K562 (cell line): ENCODE measurements at regions of chr14 and their contacts with region 1.

Region 1: DNA sequence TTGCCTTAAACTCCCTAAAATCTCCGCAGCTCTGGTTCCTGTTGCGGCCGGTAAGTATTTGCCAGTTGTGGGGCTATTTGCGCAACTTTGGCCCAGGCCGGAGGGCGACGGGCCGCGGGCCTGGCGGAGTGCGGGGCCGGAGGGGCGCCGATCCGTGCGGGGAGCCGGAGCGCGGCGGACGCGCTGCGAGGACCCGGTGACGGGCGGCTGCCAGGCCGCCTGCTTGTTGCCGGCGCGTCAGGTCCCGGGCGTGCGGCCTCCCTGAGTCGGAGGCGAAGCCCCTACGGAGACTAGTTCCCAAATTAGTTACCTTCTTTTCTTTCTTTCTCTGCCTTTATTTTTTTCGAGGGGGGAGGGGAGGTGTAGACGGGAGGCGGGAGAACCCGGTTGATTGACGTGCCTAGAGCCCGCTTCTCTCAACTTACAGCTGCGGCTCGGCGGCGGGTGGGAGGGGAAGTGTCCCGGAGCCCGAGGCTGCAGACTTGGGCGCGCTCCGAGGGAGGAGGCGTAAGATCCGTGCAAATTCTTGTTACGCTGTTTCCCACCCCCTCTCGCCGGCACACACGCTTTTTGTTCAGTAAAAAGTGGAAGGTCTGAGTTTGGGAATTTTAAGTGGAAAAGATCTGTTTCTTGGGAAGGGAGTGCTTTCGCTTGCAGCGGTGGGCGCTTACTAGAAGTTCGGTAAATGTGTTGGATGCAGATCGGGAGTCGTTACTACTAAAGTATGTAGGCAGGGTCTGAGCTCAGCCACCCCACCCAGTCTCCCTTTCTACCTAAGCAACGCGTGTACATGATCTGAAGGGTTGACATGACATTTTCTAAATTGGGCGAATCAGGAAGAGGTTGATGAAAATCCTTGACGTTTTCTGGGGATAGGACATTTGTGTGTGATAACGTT is 576 bp downstream of the ZBTB1 start:
- DNase-seq: peak; percentile 56 to 90 (median 70)
- ATAC-seq: peak; percentile 68
- H3K4me3 ChIP-seq: peak overlapping the region; percentile 64
- H3K27ac ChIP-seq: peak overlapping the region; percentile 91
- H3K4me1 ChIP-seq: peaks cover 25 to 44% of the 10 kb centered on the region in 2 experiments
- H3K27me3 ChIP-seq: no peaks in the 10 kb centered on the region
- CTCF ChIP-seq: no peak
- EP300 ChIP-seq: no peak
- POLR2A ChIP-seq: 0 out of 2 replicates have a peak, but pooled peaks have one; percentile 45
- RAD21 ChIP-seq: no peak

Region 2: GRCh38 chr14:64465191-64465822 is 39.8 kb before region 1 on chr14 and contains the start of gene AKAP5:
- CTCF ChIA-PET with region 1: no interaction called
- POLR2A ChIA-PET with region 1: no interaction called
- in situ Hi-C with region 1: no loop called
- intact Hi-C with region 1: loop called (anchors 5 kb)
- DNase-seq: peak; percentile 60 to 88 (median 82)
- ATAC-seq: peak; percentile 94
- H3K4me3 ChIP-seq: peak within 1 kb of the TSS; percentile 57
- H3K27ac ChIP-seq: no peak within 1 kb of the TSS
- H3K4me1 ChIP-seq: peaks cover 8 to 9% of the 10 kb centered on the region in 2 experiments; a peak in 4 of 5 replicates
- H3K27me3 ChIP-seq: no peaks in the 10 kb centered on the region
- CTCF ChIP-seq: no peak
- EP300 ChIP-seq: no peak
- POLR2A ChIP-seq: no peak
- RAD21 ChIP-seq: no peak
- polyA plus RNA-seq, gene AKAP5: 0.06 to 0.07 TPM